ENCODE measurements at regions of chr5 and their contacts with region 1.

Region 1: DNA sequence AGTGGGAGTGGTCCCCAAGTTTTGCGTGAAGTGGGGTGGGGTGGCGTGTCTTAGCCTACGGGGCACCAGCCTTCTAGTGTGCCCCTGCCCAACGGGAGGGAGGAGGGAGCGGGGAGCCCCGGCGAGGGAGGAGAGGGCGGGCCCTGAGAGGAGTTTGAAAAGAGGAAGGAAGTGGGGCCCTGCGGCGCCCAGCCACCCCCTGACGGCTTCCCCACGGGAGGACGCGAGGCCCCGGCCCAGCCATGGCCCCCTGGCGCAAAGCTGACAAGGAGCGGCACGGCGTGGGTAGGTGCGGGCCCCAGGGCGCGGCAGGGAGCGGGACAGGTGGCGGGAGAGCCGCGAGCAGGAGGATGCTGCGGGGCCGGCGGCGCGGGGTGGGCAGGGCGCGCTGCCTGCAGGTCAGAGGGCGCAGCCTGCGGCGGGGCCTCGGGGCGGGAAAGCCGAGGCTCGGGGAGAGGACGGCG is at the start of gene DOCK2:
- DNase-seq: no peak
- ATAC-seq: peak; percentile 95
- H3K4me3 ChIP-seq: peak within 1 kb of the TSS; percentile 89
- H3K27ac ChIP-seq: peak within 1 kb of the TSS; percentile 98
- H3K4me1 ChIP-seq: peaks cover 12% of the 10 kb centered on the region; the same call in 1 of the 2 replicates
- H3K27me3 ChIP-seq: no peaks in the 10 kb centered on the region
- CTCF ChIP-seq: no peak
- EP300 ChIP-seq: peak in 1 of 2 experiments; percentile 31; a peak in 1 of 4 replicates
- POLR2A ChIP-seq: peak; percentile 93
- RAD21 ChIP-seq: no peak
- polyA plus RNA-seq, gene DOCK2: 34.2 to 41.6 TPM

Region 2: DNA sequence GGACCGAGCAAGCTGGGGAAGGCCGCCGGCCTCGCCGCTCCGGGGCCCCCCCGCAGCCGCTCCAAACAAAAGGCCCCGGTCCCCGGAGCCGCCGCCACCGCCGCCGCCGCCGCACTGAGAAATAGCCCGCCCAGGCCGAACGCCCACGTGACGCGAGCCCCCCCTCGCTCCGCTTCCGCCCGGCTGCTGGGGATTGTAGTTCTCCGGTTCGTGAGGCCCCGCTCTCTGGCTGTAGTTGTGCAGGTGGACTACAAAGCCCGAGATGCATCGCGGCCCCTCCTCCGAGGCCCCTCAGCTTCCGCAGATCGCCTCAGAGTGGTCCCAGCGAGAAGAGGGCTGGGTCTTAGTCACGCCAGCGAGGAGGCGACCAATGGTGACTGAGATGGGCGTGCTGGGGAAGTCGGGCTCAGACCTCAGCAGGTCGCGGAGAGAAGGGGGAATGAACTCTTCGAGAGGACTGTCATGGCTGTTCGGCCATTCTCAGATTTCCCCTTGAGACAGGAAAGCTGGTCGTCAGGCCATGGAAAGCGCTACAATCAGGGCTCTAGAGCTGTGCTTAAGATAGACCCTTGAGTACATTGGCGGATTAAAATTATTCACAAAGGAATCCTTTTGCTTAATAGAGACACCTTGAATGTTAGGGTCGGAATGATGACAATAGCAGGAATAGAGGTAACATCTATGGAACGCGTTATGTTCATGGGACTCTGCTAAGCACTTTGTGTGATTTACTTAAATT is 1057.5 kb before region 1 on chr5:
- CTCF ChIA-PET with region 1: no interaction called
- POLR2A ChIA-PET with region 1: no interaction called
- RAD21 ChIA-PET with region 1: no interaction called
- SMC1A ChIA-PET with region 1: no interaction called
- in situ Hi-C with region 1: no loop called
- intact Hi-C with region 1: loop called (anchors 2 kb)
- DNase-seq: peak; percentile 97
- ATAC-seq: peak; percentile 92
- H3K4me3 ChIP-seq: peak overlapping the region; percentile 89
- H3K27ac ChIP-seq: peak overlapping the region; percentile 98
- H3K4me1 ChIP-seq: peaks cover 19% of the 10 kb centered on the region
- H3K27me3 ChIP-seq: no peaks in the 10 kb centered on the region
- CTCF ChIP-seq: no peak
- EP300 ChIP-seq: peak in 1 of 2 experiments; percentile 52; a peak in 1 of 4 replicates
- POLR2A ChIP-seq: peak; percentile 94
- RAD21 ChIP-seq: no peak

Region 3: GRCh38 chr5:169561893-169562292 is 75.2 kb before region 1 on chr5:
- CTCF ChIA-PET with region 1: no interaction called
- POLR2A ChIA-PET with region 1: no interaction called
- RAD21 ChIA-PET with region 1: no interaction called
- SMC1A ChIA-PET with region 1: no interaction called
- in situ Hi-C with region 1: no loop called
- intact Hi-C with region 1: no loop called
- DNase-seq: no peak
- ATAC-seq: no peak
- H3K4me3 ChIP-seq: no peak overlapping the region
- H3K27ac ChIP-seq: no peak overlapping the region
- H3K4me1 ChIP-seq: no peaks in the 10 kb centered on the region
- H3K27me3 ChIP-seq: peaks cover 2% of the 10 kb centered on the region in 2 experiments; a peak in 3 of 4 replicates
- CTCF ChIP-seq: no peak
- EP300 ChIP-seq: no peak
- POLR2A ChIP-seq: no peak
- RAD21 ChIP-seq: no peak

Region 4: GRCh38 chr5:169650701-169651331 is 13.7 kb after region 1 on chr5:
- CTCF ChIA-PET with region 1: interaction called, 6 read pairs
- POLR2A ChIA-PET with region 1: interaction called, 18 read pairs
- RAD21 ChIA-PET with region 1: interaction called, 47 read pairs
- SMC1A ChIA-PET with region 1: interaction called, 35 read pairs
- in situ Hi-C with region 1: no loop called
- intact Hi-C with region 1: loop called (anchors 2 kb)
- DNase-seq: peak; percentile 76
- ATAC-seq: peak; percentile 70
- H3K4me3 ChIP-seq: peak overlapping the region; percentile 50; the same call in 1 of the 2 replicates
- H3K27ac ChIP-seq: peak overlapping the region; percentile 98
- H3K4me1 ChIP-seq: peaks cover 92% of the 10 kb centered on the region
- H3K27me3 ChIP-seq: no peaks in the 10 kb centered on the region
- CTCF ChIP-seq: no peak
- EP300 ChIP-seq: peak; percentile 7 to 68; a peak in 1 of 4 replicates
- POLR2A ChIP-seq: no peak
- RAD21 ChIP-seq: 0 out of 2 replicates have a peak, but pooled peaks have one; percentile 3

Region 5: GRCh38 chr5:169656125-169656901 is 19.2 kb after region 1 on chr5:
- CTCF ChIA-PET with region 1: interaction called, 6 read pairs
- POLR2A ChIA-PET with region 1: interaction called, 16 read pairs
- RAD21 ChIA-PET with region 1: interaction called, 47 read pairs
- SMC1A ChIA-PET with region 1: interaction called, 21 read pairs
- in situ Hi-C with region 1: no loop called
- intact Hi-C with region 1: loop called (anchors 2 kb)
- DNase-seq: peak; percentile 79
- ATAC-seq: peak; percentile 75
- H3K4me3 ChIP-seq: peak overlapping the region; percentile 40; the same call in 1 of the 2 replicates
- H3K27ac ChIP-seq: peak overlapping the region; percentile 88
- H3K4me1 ChIP-seq: peaks cover 60% of the 10 kb centered on the region
- H3K27me3 ChIP-seq: no peaks in the 10 kb centered on the region
- CTCF ChIP-seq: no peak
- EP300 ChIP-seq: peak; percentile 56 to 70; a peak in 3 of 4 replicates
- POLR2A ChIP-seq: no peak
- RAD21 ChIP-seq: peak; percentile 21; the same call in 1 of the 2 replicates

Region 6: DNA sequence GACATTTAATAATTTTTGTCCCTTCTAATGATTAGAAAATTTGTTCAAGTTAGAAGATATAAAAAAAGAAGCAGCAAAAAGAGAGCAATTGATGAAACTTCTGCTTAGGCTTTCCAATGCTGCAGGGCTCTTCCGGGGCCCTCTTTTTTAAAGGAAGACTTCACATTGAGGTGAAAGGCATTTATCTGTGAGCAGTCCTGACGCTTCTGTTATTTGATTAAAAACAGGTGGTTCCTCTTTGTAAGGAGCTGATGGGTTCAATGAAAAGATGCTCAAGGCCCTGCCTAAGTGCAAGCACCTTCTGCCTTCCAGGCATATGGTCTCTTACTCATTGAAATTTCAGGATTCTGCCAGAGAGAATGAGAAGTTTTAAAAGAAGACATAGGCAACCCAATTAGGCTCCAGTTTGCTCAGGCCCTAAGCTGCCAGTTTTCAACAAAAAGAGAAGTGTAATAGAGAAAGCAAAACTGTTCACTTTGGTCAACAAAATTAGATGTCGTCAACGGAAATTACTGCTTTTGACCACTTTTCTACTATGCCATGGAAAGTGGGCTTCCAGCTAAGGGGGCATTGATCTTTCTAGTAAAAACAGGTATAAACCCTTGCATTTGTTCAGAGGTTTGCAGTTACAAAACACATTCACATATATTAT is 243.0 kb after region 1 on chr5:
- CTCF ChIA-PET with region 1: no interaction called
- POLR2A ChIA-PET with region 1: no interaction called
- RAD21 ChIA-PET with region 1: no interaction called
- SMC1A ChIA-PET with region 1: no interaction called
- in situ Hi-C with region 1: no loop called
- intact Hi-C with region 1: no loop called
- DNase-seq: no peak
- ATAC-seq: peak; percentile 69
- H3K4me3 ChIP-seq: no peak overlapping the region
- H3K27ac ChIP-seq: 0 out of 2 replicates have a peak overlapping the region, but pooled peaks have one; percentile 24
- H3K4me1 ChIP-seq: no peaks in the 10 kb centered on the region; the same call in 1 of the 2 replicates
- H3K27me3 ChIP-seq: no peaks in the 10 kb centered on the region
- CTCF ChIP-seq: no peak
- EP300 ChIP-seq: no peak
- POLR2A ChIP-seq: no peak
- RAD21 ChIP-seq: no peak

Measured in GM12878 (cell line).